Dendritic cell treated with granulocyte-macrophage colony-stimulating factor and Interleukin-4, amounts not matched to agents 40 ng/mL and 50 ng/mL, for 4 days (primary cell): ENCODE measurements at regions of chr13 and their contacts with region 1.

Region 1: GRCh38 chr13:104954210-104954609 is 1581.3 kb downstream of the EFNB2 start:
- H3K4me3 Mint-ChIP-seq: no peak overlapping the region
- H3K27ac Mint-ChIP-seq: no peak overlapping the region
- H3K4me1 Mint-ChIP-seq: peaks cover 7% of the 10 kb centered on the region
- H3K27me3 Mint-ChIP-seq: no peaks in the 10 kb centered on the region

Region 2: GRCh38 chr13:104936304-104936703 is 17.9 kb before region 1 on chr13:
- intact Hi-C with region 1: loop called (anchors 2 kb)
- H3K4me3 Mint-ChIP-seq: no peak overlapping the region
- H3K27ac Mint-ChIP-seq: no peak overlapping the region
- H3K4me1 Mint-ChIP-seq: peaks cover 3% of the 10 kb centered on the region
- H3K27me3 Mint-ChIP-seq: no peaks in the 10 kb centered on the region